ENCODE measurements at regions of chr14 and their contacts with region 1.

Region 1: GRCh38 chr14:49405291-49405690 is 180.9 kb downstream of the RPS29 start:
- DNase-seq: no peak
- H3K4me3 Mint-ChIP-seq: no peak overlapping the region
- H3K27ac Mint-ChIP-seq: no peak overlapping the region
- H3K4me1 Mint-ChIP-seq: peaks cover 13% of the 10 kb centered on the region
- H3K27me3 Mint-ChIP-seq: peaks cover 12% of the 10 kb centered on the region

Region 2: DNA sequence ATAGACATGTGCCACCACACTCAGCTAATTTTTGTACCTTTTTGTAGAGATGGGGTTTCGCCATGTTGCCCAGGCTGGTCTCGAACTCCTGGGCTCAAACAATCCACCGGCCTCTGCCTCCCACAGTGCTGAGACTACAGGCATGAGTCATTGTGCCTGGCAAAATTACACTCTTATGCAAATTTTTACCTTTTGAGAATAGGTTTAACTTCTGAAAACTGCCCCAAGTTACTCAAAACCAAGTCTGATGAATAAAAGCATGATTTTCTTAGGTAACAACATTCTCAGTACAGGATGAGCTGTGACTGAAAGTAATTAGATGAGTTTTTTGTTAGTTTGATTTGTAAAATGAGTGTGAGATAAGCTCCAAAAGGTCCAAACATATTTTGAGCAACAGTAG is 14.9 kb after region 1 on chr14:
- CTCF ChIA-PET with region 1: interaction called, 3 read pairs
- POLR2A ChIA-PET with region 1: interaction called, 4 read pairs
- intact Hi-C with region 1: loop called (anchors 1 kb)
- DNase-seq: peak; percentile 64
- H3K4me3 Mint-ChIP-seq: peak overlapping the region; percentile 20
- H3K27ac Mint-ChIP-seq: peak overlapping the region; percentile 76
- H3K4me1 Mint-ChIP-seq: peaks cover 30% of the 10 kb centered on the region
- H3K27me3 Mint-ChIP-seq: peaks cover 39% of the 10 kb centered on the region

Measured in activated CD4-positive, alpha-beta memory T cell treated with anti-CD3 and anti-CD28 coated beads for 36 hours (primary cell).